Activated B cell treated with CpG ODN at 0.5 μM for 24 hours (primary cell): ENCODE measurements at regions of chr22 and their contacts with region 1.

Region 1: GRCh38 chr22:38755911-38756532 is at the start of gene SUN2:
- DNase-seq: peak; percentile 92
- ATAC-seq: peak; percentile 75
- H3K4me3 Mint-ChIP-seq: peak within 1 kb of the TSS; percentile 92
- H3K27ac Mint-ChIP-seq: peak within 1 kb of the TSS; percentile 99
- H3K4me1 Mint-ChIP-seq: peaks cover 71% of the 10 kb centered on the region
- H3K27me3 Mint-ChIP-seq: no peaks in the 10 kb centered on the region
- CTCF ChIP-seq: no peak
- total RNA-seq, gene SUN2: 122 and 146 TPM in 2 replicates

Region 2: GRCh38 chr22:38649841-38650522 is 106.0 kb before region 1 on chr22:
- CTCF ChIA-PET with region 1: no interaction called
- POLR2A ChIA-PET with region 1: no interaction called
- intact Hi-C with region 1: no loop called
- DNase-seq: no peak
- ATAC-seq: no peak
- H3K4me3 Mint-ChIP-seq: no peak overlapping the region
- H3K27ac Mint-ChIP-seq: no peak overlapping the region
- H3K4me1 Mint-ChIP-seq: no peaks in the 10 kb centered on the region
- H3K27me3 Mint-ChIP-seq: no peaks in the 10 kb centered on the region
- CTCF ChIP-seq: no peak

Region 3: DNA sequence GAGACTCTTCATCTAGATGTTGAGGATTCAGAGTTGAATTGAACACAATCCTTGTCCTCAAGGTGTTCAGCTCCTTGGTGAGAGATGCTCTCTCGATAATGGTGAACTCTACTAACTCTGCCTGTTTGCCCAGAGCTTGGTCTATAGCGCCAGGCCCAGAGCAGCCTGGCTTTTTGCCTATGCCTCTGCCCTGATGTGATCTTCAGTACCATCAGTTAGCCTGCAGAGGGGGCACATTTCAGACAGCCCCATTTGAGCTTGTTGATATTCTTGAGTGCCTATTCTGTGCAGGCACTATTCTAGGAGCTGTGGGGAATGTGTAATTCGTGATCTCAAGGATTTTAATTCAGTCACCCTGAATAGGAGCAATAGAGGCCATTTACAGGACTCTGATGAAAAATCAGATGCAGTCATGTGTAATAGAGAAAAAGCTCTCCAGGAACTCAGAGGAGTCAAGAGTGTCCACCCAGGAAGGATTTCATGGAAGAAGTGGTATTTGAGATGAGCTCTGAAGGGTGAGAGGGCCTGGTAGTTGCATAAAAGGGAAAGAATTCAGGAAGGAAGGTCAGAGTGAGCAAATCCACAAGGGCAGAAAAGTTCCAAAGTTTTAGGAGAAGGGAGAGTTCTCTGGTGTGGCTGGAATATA is 31.0 kb before region 1 on chr22:
- CTCF ChIA-PET with region 1: interaction called, 4 read pairs
- POLR2A ChIA-PET with region 1: interaction called, 3 read pairs
- intact Hi-C with region 1: loop called (anchors 5 kb)
- DNase-seq: no peak
- ATAC-seq: peak; percentile 88
- H3K4me3 Mint-ChIP-seq: no peak overlapping the region
- H3K27ac Mint-ChIP-seq: no peak overlapping the region
- H3K4me1 Mint-ChIP-seq: no peaks in the 10 kb centered on the region
- H3K27me3 Mint-ChIP-seq: no peaks in the 10 kb centered on the region
- CTCF ChIP-seq: no peak

Region 4: DNA sequence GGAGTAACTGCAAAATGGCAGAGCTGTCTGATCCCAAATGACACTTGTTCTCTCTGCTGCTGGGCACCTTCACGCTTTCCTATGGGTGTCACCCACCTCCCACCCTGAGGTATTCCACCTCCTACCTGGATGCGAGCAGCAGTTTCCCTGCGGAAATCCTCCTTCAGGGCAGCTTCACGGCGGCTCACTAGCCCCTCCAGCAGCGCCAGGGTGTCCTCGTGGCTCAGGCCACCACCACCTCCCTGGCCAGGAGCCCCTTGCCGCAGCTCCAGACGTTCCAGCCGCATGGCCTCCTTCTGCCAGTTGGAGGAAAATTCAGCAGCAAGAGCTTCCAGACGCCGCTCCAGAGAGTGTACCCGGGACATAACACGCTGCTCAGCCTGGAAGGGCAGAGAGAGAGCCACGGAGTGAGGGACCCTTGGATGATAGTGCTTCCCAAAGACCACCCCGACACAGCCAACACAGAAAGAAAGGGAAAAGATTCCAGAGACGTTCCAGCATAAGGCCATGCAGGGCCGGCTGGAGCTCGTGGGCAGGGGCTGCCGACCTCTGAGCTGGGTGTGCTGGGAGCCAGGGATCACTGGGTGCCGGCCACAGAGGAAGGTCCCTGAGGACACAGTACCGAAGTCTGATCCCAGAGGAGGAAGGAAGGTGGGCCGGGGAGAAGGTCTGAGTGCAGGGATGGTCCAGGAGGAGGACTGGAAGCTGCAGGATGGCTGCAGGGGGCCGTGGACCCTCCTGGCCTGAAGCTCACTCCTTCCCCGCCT is 13.7 kb before region 1 on chr22:
- CTCF ChIA-PET with region 1: interaction called, 3 read pairs
- POLR2A ChIA-PET with region 1: interaction called, 12 read pairs
- intact Hi-C with region 1: no loop called
- DNase-seq: no peak
- ATAC-seq: no peak
- H3K4me3 Mint-ChIP-seq: no peak overlapping the region
- H3K27ac Mint-ChIP-seq: no peak overlapping the region
- H3K4me1 Mint-ChIP-seq: no peaks in the 10 kb centered on the region
- H3K27me3 Mint-ChIP-seq: no peaks in the 10 kb centered on the region
- CTCF ChIP-seq: no peak

Region 5: GRCh38 chr22:38793721-38794466 is 37.9 kb after region 1 on chr22 and contains the start of gene DNAL4:
- CTCF ChIA-PET with region 1: no interaction called
- POLR2A ChIA-PET with region 1: interaction called, 4 read pairs
- intact Hi-C with region 1: loop called (anchors 1 kb)
- DNase-seq: peak; percentile 78
- ATAC-seq: peak; percentile 99
- H3K4me3 Mint-ChIP-seq: peak within 1 kb of the TSS; percentile 87
- H3K27ac Mint-ChIP-seq: peak within 1 kb of the TSS; percentile 87
- H3K4me1 Mint-ChIP-seq: peaks cover 14% of the 10 kb centered on the region
- H3K27me3 Mint-ChIP-seq: peaks cover 17% of the 10 kb centered on the region
- CTCF ChIP-seq: no peak
- total RNA-seq, gene DNAL4: 7.7 and 8.4 TPM in 2 replicates

Region 6: GRCh38 chr22:38831166-38831945 is 75.3 kb after region 1 on chr22:
- CTCF ChIA-PET with region 1: no interaction called
- POLR2A ChIA-PET with region 1: no interaction called
- intact Hi-C with region 1: no loop called
- DNase-seq: no peak
- ATAC-seq: no peak
- H3K4me3 Mint-ChIP-seq: no peak overlapping the region
- H3K27ac Mint-ChIP-seq: no peak overlapping the region
- H3K4me1 Mint-ChIP-seq: no peaks in the 10 kb centered on the region
- H3K27me3 Mint-ChIP-seq: peaks cover 14% of the 10 kb centered on the region
- CTCF ChIP-seq: no peak